ENCODE measurements at regions of chr11 and their contacts with region 1.

Region 1: GRCh38 chr11:130069684-130070108 is at the start of gene APLP2:
- DNase-seq: peak; percentile 93 to 98 (median 95)
- ATAC-seq: peak; percentile 96
- H3K4me3 ChIP-seq: peak within 1 kb of the TSS; percentile 87
- H3K4me3 Mint-ChIP-seq: peak within 1 kb of the TSS; percentile 94 to 99 (median 96)
- H3K27ac ChIP-seq: peak within 1 kb of the TSS; percentile 89
- H3K27ac Mint-ChIP-seq: peak within 1 kb of the TSS; percentile 92 to 97 (median 95)
- H3K4me1 ChIP-seq: peaks cover 3 to 5% of the 10 kb centered on the region in 2 donors
- H3K4me1 Mint-ChIP-seq: peaks cover 19 to 33% (median 21%) of the 10 kb centered on the region in 7 donors
- H3K27me3 ChIP-seq: peaks cover 0 to 3% of the 10 kb centered on the region in 2 donors
- H3K27me3 Mint-ChIP-seq: peaks cover 0 to 29% (median 0%) of the 10 kb centered on the region in 5 donors
- total RNA-seq, gene APLP2: 26.6 to 172 (median 51.5) TPM

Region 2: GRCh38 chr11:129279326-129280026 is 790.2 kb before region 1 on chr11:
- CTCF ChIA-PET with region 1: no interaction called
- POLR2A ChIA-PET with region 1: no interaction called
- intact Hi-C with region 1: loop called in 1 of 2 experiments (anchors 5 kb)
- DNase-seq: peak; percentile 70 to 90 (median 82)
- ATAC-seq: peak; percentile 94
- H3K4me3 ChIP-seq: peak overlapping the region; percentile 58
- H3K4me3 Mint-ChIP-seq: peak overlapping the region; percentile 74 to 91 (median 86)
- H3K27ac ChIP-seq: peak overlapping the region; percentile 49
- H3K27ac Mint-ChIP-seq: peak overlapping the region; percentile 69 to 91 (median 80)
- H3K4me1 ChIP-seq: peaks cover 4 to 6% of the 10 kb centered on the region in 2 donors
- H3K4me1 Mint-ChIP-seq: peaks cover 14 to 43% (median 33%) of the 10 kb centered on the region in 7 donors
- H3K27me3 ChIP-seq: peaks cover 0 to 3% of the 10 kb centered on the region in 2 donors
- H3K27me3 Mint-ChIP-seq: peaks cover 8 to 32% (median 17%) of the 10 kb centered on the region in 5 donors

Region 3: GRCh38 chr11:129853518-129854236 is 216.0 kb before region 1 on chr11:
- CTCF ChIA-PET with region 1: no interaction called
- POLR2A ChIA-PET with region 1: no interaction called
- intact Hi-C with region 1: loop called in 1 of 2 experiments (anchors 1 kb)
- DNase-seq: peak; percentile 34 to 96 (median 93)
- ATAC-seq: peak; percentile 94
- H3K4me3 ChIP-seq: peak overlapping the region; percentile 21
- H3K4me3 Mint-ChIP-seq: peak overlapping the region; percentile 49 to 84 (median 74)
- H3K27ac ChIP-seq: peak overlapping the region; percentile 68
- H3K27ac Mint-ChIP-seq: peak overlapping the region; percentile 94 to 99 (median 98)
- H3K4me1 ChIP-seq: peaks cover 14 to 24% of the 10 kb centered on the region in 2 donors
- H3K4me1 Mint-ChIP-seq: peaks cover 17 to 68% (median 51%) of the 10 kb centered on the region in 7 donors
- H3K27me3 ChIP-seq: no peaks in the 10 kb centered on the region
- H3K27me3 Mint-ChIP-seq: peaks cover 0 to 2% (median 0%) of the 10 kb centered on the region in 5 donors

Region 4: GRCh38 chr11:129922674-129923073 is 147.0 kb before region 1 on chr11:
- CTCF ChIA-PET with region 1: interaction called, 5 read pairs
- POLR2A ChIA-PET with region 1: no interaction called
- intact Hi-C with region 1: loop called (anchors 1 to 2 kb)
- DNase-seq: peak in 1 of 9 donors; percentile 0
- ATAC-seq: no peak
- H3K4me3 ChIP-seq: no peak overlapping the region
- H3K4me3 Mint-ChIP-seq: peak overlapping the region in 1 of 10 donors; percentile 35
- H3K27ac ChIP-seq: no peak overlapping the region
- H3K27ac Mint-ChIP-seq: peak overlapping the region in 7 of 9 donors; percentile 13 to 58 (median 28)
- H3K4me1 ChIP-seq: peaks cover 0 to 4% of the 10 kb centered on the region in 2 donors
- H3K4me1 Mint-ChIP-seq: peaks cover 6 to 22% (median 18%) of the 10 kb centered on the region in 7 donors
- H3K27me3 ChIP-seq: no peaks in the 10 kb centered on the region
- H3K27me3 Mint-ChIP-seq: no peaks in the 10 kb centered on the region

Region 5: GRCh38 chr11:130118636-130119387 is 49.1 kb after region 1 on chr11:
- CTCF ChIA-PET with region 1: interaction called, 3 read pairs
- POLR2A ChIA-PET with region 1: no interaction called
- intact Hi-C with region 1: loop called in 1 of 2 experiments (anchors 1 kb)
- DNase-seq: peak in 5 of 9 donors; percentile 5 to 36 (median 21)
- ATAC-seq: peak; percentile 75
- H3K4me3 ChIP-seq: no peak overlapping the region
- H3K4me3 Mint-ChIP-seq: peak overlapping the region in 9 of 10 donors; percentile 4 to 72 (median 40)
- H3K27ac ChIP-seq: no peak overlapping the region
- H3K27ac Mint-ChIP-seq: no peak overlapping the region
- H3K4me1 ChIP-seq: peaks cover 14 to 31% of the 10 kb centered on the region in 2 donors
- H3K4me1 Mint-ChIP-seq: peaks cover 25 to 51% (median 43%) of the 10 kb centered on the region in 7 donors
- H3K27me3 ChIP-seq: no peaks in the 10 kb centered on the region
- H3K27me3 Mint-ChIP-seq: peaks cover 0 to 20% (median 0%) of the 10 kb centered on the region in 5 donors

Region 6: GRCh38 chr11:130916238-130916855 is 846.7 kb after region 1 on chr11 and contains the start of gene SNX19:
- CTCF ChIA-PET with region 1: no interaction called
- POLR2A ChIA-PET with region 1: no interaction called
- intact Hi-C with region 1: loop called (anchors 1 to 10 kb)
- DNase-seq: peak; percentile 83 to 96 (median 89)
- ATAC-seq: peak; percentile 100
- H3K4me3 ChIP-seq: peak within 1 kb of the TSS; percentile 54
- H3K4me3 Mint-ChIP-seq: peak within 1 kb of the TSS; percentile 83 to 91 (median 88)
- H3K27ac ChIP-seq: peak within 1 kb of the TSS; percentile 84
- H3K27ac Mint-ChIP-seq: peak within 1 kb of the TSS; percentile 85 to 95 (median 92)
- H3K4me1 ChIP-seq: peaks cover 9 to 16% of the 10 kb centered on the region in 2 donors
- H3K4me1 Mint-ChIP-seq: peaks cover 5 to 53% (median 40%) of the 10 kb centered on the region in 7 donors
- H3K27me3 ChIP-seq: no peaks in the 10 kb centered on the region
- H3K27me3 Mint-ChIP-seq: peaks cover under 1 to 12% (median 10%) of the 10 kb centered on the region in 5 donors
- total RNA-seq, gene SNX19: 53.9 to 101 (median 57.1) TPM